Panc1 (cell line): ENCODE measurements at regions of chr1 and their contacts with region 1.

Region 1: DNA sequence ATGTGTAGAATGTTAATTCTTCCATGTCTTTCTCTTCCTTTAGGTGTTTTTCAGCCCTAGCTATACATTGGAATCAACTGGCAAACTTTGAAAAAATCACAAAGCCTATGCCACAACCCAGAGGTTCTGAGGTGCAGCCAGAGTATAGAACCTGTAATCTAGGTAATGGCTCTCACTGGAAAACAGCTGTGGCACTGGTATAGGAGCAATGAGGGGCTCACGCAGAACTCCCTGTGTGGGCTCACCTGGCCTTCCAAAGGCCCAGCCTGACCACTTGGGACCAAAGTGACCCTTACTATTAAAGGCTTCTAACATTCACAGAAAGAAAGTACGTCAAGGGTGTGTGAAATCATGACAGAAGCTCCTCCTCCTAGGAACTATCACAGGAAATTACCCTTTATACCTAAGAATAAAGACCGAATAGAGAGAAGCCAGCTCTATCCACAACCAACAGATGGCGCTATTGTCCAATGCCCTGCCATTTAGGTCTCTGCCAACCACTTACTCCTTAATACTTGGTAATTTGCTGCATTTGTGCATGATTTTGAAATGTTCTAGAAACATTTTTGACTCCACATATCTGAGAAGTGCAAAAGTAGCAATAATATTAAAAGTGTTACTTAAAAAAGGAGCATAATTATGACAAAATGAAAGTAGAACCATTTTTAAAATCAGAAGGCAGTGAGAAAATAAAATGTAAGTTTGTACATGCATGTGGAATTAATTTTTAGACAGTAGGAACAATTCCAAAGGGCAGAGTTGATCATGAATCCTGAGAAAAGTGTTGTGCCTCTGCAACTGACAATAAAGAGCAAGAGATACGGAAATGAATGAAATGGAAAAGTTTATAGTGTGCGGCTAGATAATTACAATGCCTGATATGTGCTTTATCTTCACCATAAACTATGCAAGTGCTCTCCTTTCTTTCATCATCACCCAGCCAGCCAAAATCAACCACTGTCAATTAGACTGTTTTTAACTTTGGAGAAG is 93.1 kb upstream of the HAO2 start:
- DNase-seq: peak; percentile 57
- ATAC-seq: peak; percentile 74
- H3K4me3 ChIP-seq: no peak overlapping the region
- H3K27ac ChIP-seq: no peak overlapping the region
- H3K4me1 ChIP-seq: no peaks in the 10 kb centered on the region; the same call in 1 of the 2 replicates
- H3K27me3 ChIP-seq: no peaks in the 10 kb centered on the region; the same call in 1 of the 2 replicates
- CTCF ChIP-seq: peak; percentile 91

Region 2: DNA sequence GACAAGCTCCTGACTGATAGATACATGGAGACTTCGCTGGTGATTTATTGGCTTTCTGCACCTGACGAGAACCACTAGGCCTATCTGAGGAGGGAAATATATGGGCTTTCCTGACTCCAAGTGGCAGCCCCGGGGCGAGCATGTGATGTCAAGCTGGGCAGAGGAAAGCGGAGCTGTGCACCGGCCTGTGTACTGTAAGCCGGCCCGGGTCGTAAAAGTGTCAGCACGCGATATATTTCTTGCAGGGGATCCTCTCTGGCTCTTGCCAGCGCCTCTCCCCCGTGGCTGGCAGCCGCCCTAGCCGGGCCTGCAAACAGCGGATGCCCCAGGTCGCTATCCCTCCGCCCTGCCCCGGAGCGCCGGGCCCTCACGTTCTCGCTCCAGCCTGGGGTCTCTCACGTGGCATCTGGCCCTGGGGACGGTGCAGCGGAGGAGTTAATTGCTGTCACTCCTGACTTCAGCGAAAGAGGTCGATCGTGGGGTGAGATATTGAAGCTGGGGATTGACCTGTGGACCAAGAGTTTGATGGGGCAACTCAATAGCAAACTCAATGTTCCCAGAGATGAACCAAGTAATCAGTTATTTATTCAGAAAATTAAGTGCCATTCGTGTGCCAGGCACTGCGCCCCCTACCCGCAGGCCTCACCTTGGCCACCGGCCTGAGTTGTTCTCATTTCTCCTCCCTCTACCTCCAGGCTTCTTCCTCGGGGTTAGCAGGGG is 52.2 kb after region 1 on chr1:
- CTCF ChIA-PET with region 1: no interaction called
- POLR2A ChIA-PET with region 1: no interaction called
- in situ Hi-C with region 1: no loop called
- intact Hi-C with region 1: no loop called
- DNase-seq: no peak
- ATAC-seq: peak; percentile 62
- H3K4me3 ChIP-seq: peak overlapping the region in 1 of 2 experiments; percentile 20; a peak in 2 of 4 replicates
- H3K27ac ChIP-seq: no peak overlapping the region
- H3K4me1 ChIP-seq: no peaks in the 10 kb centered on the region; the same call in 1 of the 2 replicates
- H3K27me3 ChIP-seq: no peaks in the 10 kb centered on the region; the same call in 1 of the 2 replicates
- CTCF ChIP-seq: peak; percentile 71

Region 3: GRCh38 chr1:119367427-119368124 is 92.1 kb after region 1 on chr1:
- CTCF ChIA-PET with region 1: interaction called, 4 read pairs
- POLR2A ChIA-PET with region 1: no interaction called
- in situ Hi-C with region 1: no loop called
- intact Hi-C with region 1: loop called (anchors 5 kb)
- DNase-seq: peak; percentile 30
- ATAC-seq: peak; percentile 75; the same call in 1 of the 2 replicates
- H3K4me3 ChIP-seq: no peak overlapping the region
- H3K27ac ChIP-seq: no peak overlapping the region
- H3K4me1 ChIP-seq: no peaks in the 10 kb centered on the region
- H3K27me3 ChIP-seq: peaks cover 12% of the 10 kb centered on the region
- CTCF ChIP-seq: peak; percentile 93